ENCODE measurements at regions of chr10 and their contacts with region 1.

Region 1: DNA sequence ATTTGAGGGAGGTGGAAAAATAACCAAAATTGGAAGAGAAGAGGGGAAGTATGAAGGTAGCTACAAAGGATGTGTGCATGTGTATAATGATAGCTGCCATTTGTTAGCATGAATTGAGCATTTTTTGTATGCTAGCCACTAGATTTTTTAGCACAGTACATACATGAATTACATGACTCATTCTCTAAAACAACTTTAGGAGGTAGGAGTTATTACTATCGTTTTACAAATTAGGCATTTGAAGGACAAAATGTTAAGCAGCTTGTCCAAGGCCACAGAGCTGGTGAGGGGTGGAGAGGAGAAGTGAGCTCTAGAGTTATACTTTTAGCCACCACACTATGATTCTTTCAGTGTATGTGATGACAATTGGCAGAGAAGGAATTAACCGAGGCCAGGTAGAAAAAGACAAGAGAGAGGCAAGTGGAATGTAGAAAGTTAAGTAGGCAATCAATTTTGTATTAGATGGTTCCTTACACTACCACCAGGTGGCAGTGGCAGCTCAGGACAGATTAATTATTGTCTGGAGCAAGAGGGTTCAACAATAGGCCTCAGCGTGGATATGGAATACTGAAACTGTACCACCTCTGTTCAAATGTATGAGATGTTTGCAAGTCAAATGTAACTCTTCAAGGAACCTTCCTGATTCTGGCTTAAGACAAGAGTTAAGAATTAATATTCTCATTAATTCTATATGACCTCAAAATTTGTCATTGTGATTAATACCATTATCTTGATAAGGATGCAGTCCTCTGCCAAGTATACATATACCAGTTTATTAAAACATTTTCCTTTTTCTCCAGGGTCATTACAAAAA is 128.0 kb downstream of the MBL2 start:
- DNase-seq: peak in 1 of 4 donors; percentile 56
- ATAC-seq: peak; percentile 92
- H3K4me3 ChIP-seq: no peak overlapping the region
- H3K27ac ChIP-seq: no peak overlapping the region
- H3K4me1 ChIP-seq: no peaks in the 10 kb centered on the region
- H3K27me3 ChIP-seq: no peaks in the 10 kb centered on the region
- CTCF ChIP-seq: peak; percentile 60 to 77

Region 2: DNA sequence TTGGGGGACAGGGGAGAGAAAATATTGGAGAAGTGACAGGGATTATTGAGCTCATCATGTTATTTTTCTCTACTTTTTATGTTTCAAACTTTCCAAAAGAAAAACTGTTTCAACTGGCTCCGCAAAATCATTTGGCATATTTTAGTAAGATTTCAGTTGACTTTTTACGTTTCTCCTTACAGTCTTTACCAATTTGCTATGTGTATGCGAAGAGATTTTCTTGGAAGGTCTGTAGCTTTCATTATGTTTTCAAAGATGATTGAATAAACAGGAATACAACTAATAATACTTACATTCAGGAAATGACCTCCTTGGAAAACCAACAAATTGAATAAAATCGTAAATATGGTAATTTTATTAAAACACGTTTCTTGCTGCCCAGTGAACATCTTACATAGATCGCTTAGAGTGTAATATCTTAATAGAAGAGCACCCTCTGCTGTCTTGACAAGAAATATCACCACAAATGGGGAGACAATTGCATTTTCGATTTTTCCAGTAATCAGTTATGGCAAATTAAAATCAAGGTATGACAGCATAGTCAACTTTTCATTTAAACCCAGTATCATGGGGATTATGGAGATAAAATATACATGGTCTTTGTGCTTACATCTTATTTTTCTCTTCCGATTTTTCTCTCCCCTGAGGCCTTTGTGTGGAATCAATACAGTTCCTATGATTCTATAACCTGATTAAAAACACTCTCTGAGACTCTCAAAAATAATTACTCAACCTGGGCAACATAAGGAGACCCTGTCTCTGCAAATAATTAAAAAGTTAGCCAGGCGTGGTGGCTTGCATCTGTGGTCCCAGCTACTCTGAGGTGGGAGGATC is 84.9 kb after region 1 on chr10:
- intact Hi-C with region 1: loop called in 1 of 2 experiments (anchors 2 kb)
- DNase-seq: peak in 2 of 4 donors; percentile 28 to 40
- ATAC-seq: peak; percentile 80
- H3K4me3 ChIP-seq: no peak overlapping the region
- H3K27ac ChIP-seq: no peak overlapping the region
- H3K4me1 ChIP-seq: no peaks in the 10 kb centered on the region
- H3K27me3 ChIP-seq: no peaks in the 10 kb centered on the region
- CTCF ChIP-seq: peak; percentile 20 to 43

Region 3: GRCh38 chr10:52940921-52941320 is 296.3 kb after region 1 on chr10:
- intact Hi-C with region 1: no loop called
- DNase-seq: peak in 1 of 4 donors; percentile 57
- ATAC-seq: no peak
- H3K4me3 ChIP-seq: no peak overlapping the region
- H3K27ac ChIP-seq: no peak overlapping the region
- H3K4me1 ChIP-seq: no peaks in the 10 kb centered on the region
- H3K27me3 ChIP-seq: no peaks in the 10 kb centered on the region
- CTCF ChIP-seq: no peak